ENCODE measurements at regions of chr20 and their contacts with region 1.

Region 1: GRCh38 chr20:36199345-36200257 is 36.7 kb upstream of the AAR2 start:
- DNase-seq: peak; percentile 84 to 91
- H3K4me3 ChIP-seq: no peak overlapping the region
- H3K27ac ChIP-seq: no peak overlapping the region
- H3K4me1 ChIP-seq: peaks cover 0 to 7% (median 0%) of the 10 kb centered on the region in 4 donors
- H3K27me3 ChIP-seq: no peaks in the 10 kb centered on the region
- CTCF ChIP-seq: peak in 5 of 7 experiments; percentile 70 to 90 (median 88)
- EP300 ChIP-seq: no peak
- POLR2A ChIP-seq: no peak

Region 2: DNA sequence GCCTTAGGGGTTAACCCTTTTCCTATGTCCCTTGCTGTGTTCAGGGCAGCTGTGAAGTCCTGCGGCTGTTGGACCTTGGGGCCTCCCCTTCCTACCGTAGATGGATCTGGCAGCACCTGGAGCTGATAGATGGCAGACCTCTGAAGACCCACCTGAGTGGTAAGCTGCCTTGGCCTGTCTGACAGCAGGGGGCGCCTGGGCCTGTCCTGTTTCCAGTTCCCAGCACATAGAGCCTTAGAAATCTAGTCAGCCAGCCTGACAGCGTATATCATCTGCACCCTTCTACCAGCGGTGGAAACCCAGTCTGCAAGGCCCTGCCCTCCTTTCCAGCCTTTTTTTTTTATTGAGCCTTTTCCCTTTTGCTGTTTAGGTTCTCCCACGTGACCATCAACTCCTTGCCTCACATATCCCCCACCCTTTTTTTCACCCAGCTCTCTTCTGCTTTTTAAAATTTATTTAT is 204.6 kb before region 1 on chr20:
- intact Hi-C with region 1: loop called (anchors 5 kb)
- DNase-seq: peak; percentile 90 to 94
- H3K4me3 ChIP-seq: no peak overlapping the region
- H3K27ac ChIP-seq: no peak overlapping the region
- H3K4me1 ChIP-seq: peaks cover 0 to 6% (median 0%) of the 10 kb centered on the region in 4 donors
- H3K27me3 ChIP-seq: no peaks in the 10 kb centered on the region
- CTCF ChIP-seq: peak in 5 of 7 experiments; percentile 81 to 92 (median 85)
- EP300 ChIP-seq: no peak
- POLR2A ChIP-seq: no peak

Region 3: GRCh38 chr20:36273414-36274180 is 74.0 kb after region 1 on chr20:
- intact Hi-C with region 1: no loop called
- DNase-seq: peak in 1 of 2 donors; percentile 31
- H3K4me3 ChIP-seq: no peak overlapping the region
- H3K27ac ChIP-seq: no peak overlapping the region
- H3K4me1 ChIP-seq: no peaks in the 10 kb centered on the region
- H3K27me3 ChIP-seq: peaks cover 8 to 46% (median 17%) of the 10 kb centered on the region in 3 donors
- CTCF ChIP-seq: no peak
- EP300 ChIP-seq: no peak
- POLR2A ChIP-seq: no peak

Region 4: DNA sequence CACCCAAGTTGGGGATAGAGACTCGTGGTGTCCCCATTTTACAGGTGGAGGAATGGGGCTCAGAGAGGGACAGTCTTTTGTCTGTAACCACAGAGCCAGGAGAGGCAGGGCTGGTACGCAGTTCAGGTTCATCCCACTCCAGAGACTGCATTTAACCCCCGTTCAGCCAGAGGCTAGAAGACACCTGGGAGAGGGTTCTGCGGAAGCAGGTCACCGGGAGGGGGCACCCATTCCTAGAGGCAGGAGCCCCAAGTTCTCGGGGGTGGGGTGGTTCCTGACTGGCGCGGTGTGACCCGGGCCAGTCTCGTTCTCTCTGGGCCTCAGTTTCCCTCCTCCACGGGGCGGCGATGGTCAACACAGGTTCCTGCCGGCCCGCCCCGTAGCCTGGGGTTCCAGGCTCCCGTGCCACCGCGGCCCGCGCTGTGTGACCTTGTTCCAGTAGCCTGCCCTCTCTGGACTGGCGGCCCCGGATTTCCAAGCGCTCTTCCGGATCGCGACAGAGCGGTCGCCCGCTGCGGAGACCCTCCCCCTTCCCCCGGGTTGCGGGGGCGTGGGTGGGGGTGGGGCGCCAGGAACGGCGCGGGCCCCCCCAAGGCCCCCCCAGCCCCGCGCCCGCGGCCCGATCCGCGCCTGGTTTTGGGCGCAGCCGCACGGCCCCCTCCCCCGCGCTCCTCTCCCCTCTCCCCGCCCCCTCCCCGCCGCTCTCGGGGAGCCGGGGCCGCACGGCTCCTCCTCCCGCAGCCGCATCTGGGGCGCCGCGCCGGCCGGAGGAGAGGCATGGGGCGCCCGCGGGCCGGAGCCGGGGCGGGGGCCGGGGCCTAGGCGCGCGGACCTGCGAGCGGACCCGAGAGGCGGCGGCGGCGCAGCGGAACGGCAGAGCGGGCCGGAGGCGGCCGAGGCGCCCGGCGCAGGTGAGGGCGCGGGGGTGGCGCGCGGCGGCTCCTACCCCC is 106.3 kb after region 1 on chr20 and contains the start of gene DLGAP4:
- intact Hi-C with region 1: no loop called
- DNase-seq: peak; percentile 17 to 48
- H3K4me3 ChIP-seq: peak within 1 kb of the TSS; percentile 34 to 49 (median 44)
- H3K27ac ChIP-seq: no peak within 1 kb of the TSS
- H3K4me1 ChIP-seq: peaks cover 13 to 19% (median 18%) of the 10 kb centered on the region in 4 donors
- H3K27me3 ChIP-seq: peaks cover 35 to 100% (median 83%) of the 10 kb centered on the region in 3 donors
- CTCF ChIP-seq: no peak
- EP300 ChIP-seq: no peak
- POLR2A ChIP-seq: no peak
- total RNA-seq, gene DLGAP4: 15.1 to 92.2 (median 54.0) TPM

Region 5: GRCh38 chr20:36447101-36447500 is 247.5 kb after region 1 on chr20:
- intact Hi-C with region 1: loop called (anchors 10 kb)
- DNase-seq: peak in 1 of 2 donors; percentile 70
- H3K4me3 ChIP-seq: no peak overlapping the region
- H3K27ac ChIP-seq: no peak overlapping the region
- H3K4me1 ChIP-seq: no peaks in the 10 kb centered on the region
- H3K27me3 ChIP-seq: no peaks in the 10 kb centered on the region
- CTCF ChIP-seq: no peak
- EP300 ChIP-seq: no peak
- POLR2A ChIP-seq: no peak

Measured in stomach (tissue), 19 donors.